ENCODE measurements at regions of chr22 and their contacts with region 1.

Region 1: DNA sequence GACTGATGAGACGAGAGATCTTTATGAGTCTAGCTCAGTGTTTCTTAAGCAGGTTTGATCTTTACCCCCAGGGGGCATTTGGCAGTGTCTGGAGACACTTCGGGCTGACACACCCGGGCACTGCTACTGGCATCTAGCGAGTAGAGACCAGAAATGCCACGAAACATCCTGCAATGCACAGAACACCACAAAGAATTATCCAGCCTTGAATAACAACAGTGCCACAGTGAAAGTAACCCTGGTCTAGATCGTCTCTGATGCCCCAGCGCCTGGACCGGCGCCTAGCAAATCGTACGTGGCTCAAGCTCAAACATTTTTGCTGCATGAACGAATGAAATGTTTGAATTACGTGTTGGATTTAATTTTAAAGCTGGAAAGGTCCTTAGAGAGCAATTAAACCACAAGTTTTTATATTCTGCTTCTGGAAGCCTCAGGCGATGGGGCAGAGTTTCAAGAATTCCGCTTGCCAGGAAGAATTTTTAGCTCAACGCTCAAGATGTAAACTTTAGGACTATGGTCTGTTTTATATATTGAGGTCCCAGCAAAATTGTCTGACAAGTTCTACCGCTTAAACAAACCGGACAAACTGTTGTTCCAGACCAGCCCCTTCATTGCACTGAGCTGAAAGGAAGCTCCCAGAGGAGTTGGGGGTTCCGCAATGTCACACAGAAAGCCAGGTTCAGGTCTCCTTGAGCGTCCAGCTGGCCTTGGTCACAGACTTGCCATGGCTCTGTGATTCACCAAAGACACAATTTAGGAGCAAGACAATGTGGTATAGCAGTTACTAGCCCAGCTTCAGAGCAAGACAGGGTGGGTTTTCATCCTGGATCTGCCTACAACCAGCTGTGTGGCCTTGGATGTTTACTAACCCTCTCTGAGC is 44.2 kb upstream of the SMTN start:
- DNase-seq: no peak
- H3K4me3 ChIP-seq: peak overlapping the region in 1 of 2 donors; percentile 30
- H3K27ac ChIP-seq: peak overlapping the region; percentile 92
- H3K4me1 ChIP-seq: peaks cover 42% of the 10 kb centered on the region
- H3K27me3 ChIP-seq: no peaks in the 10 kb centered on the region
- CTCF ChIP-seq: no peak
- POLR2A ChIP-seq: no peak

Region 2: DNA sequence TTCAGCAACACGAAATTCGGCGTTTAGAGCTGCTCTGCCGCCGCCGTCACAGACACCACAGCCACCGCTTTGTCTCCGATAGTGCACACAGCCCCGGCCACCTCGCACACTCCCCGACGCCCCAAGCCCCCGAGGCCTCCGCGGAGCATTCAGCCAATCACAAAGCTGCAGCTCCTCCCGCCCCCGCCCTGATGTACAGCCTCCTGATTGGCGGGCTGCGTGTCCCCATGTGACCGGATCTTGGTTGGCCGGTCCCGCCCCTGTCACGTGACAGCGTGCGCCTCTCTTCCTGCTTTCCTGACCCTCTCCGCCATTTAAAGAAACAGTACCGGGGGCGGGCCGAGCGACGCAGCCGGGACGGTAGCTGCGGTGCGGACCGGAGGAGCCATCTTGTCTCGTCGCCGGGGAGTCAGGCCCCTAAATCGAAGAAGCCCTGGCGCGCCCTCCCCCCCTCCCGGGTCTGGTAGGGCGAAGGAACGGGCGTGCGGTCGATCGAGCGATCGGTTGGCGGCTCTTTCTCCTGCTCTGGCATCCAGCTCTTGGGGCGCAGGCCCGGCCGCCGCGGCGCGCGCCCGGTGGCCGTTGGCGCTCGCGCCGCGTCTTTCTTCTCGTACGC is 67.9 kb before region 1 on chr22 and contains the start of gene TUG1:
- intact Hi-C with region 1: loop called (anchors 10 kb)
- DNase-seq: peak; percentile 98 to 99
- H3K4me3 ChIP-seq: peak within 1 kb of the TSS; percentile 73 to 93
- H3K27ac ChIP-seq: peak within 1 kb of the TSS; percentile 94
- H3K4me1 ChIP-seq: peaks cover 48% of the 10 kb centered on the region
- H3K27me3 ChIP-seq: no peaks in the 10 kb centered on the region
- CTCF ChIP-seq: no peak
- POLR2A ChIP-seq: peak in 1 of 2 donors; percentile 84
- total RNA-seq, gene TUG1: 85.0 TPM

Measured in vagina (tissue), 2 donors.